ENCODE measurements at regions of chr4 and their contacts with region 1.

Region 1: GRCh38 chr4:153127760-153128494 is 76.3 kb upstream of the TRIM2 start:
- DNase-seq: peak; percentile 69 to 80
- ATAC-seq: peak; percentile 75 to 96 (median 78)
- H3K4me3 ChIP-seq: no peak overlapping the region
- H3K27ac ChIP-seq: no peak overlapping the region
- H3K4me1 ChIP-seq: no peaks in the 10 kb centered on the region
- H3K27me3 ChIP-seq: no peaks in the 10 kb centered on the region
- CTCF ChIP-seq: peak; percentile 85

Region 2: DNA sequence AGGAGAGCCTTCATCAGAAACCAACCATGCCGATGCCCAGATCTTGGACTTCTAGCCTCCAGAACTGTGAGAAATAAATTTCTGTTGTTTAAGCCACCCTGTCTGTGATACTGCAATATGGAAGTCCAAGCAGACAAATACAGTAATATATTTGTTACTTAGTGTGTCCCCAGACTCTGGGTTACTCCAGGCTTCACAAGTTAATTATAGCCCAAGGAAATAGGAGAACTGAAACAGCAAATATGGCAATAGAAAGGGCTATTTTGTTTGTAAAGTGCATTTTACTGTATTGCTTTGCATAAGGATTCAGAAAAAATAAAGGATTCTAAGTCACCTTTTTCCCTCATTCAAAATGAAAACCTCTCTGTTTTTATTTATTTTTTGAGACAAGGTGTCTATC is 364.1 kb before region 1 on chr4:
- intact Hi-C with region 1: no loop called
- DNase-seq: no peak
- ATAC-seq: no peak
- H3K4me3 ChIP-seq: no peak overlapping the region
- H3K27ac ChIP-seq: no peak overlapping the region
- H3K4me1 ChIP-seq: no peaks in the 10 kb centered on the region
- H3K27me3 ChIP-seq: no peaks in the 10 kb centered on the region
- CTCF ChIP-seq: no peak

Region 3: GRCh38 chr4:152850377-152850776 is 277.6 kb before region 1 on chr4:
- intact Hi-C with region 1: loop called (anchors 2 to 5 kb)
- DNase-seq: peak; percentile 42 to 64
- ATAC-seq: peak; percentile 93 to 97 (median 96)
- H3K4me3 ChIP-seq: no peak overlapping the region
- H3K27ac ChIP-seq: peak overlapping the region; percentile 39
- H3K4me1 ChIP-seq: peaks cover 3% of the 10 kb centered on the region
- H3K27me3 ChIP-seq: no peaks in the 10 kb centered on the region
- CTCF ChIP-seq: no peak

Measured in psoas muscle (tissue), 8 donors.